ENCODE measurements at regions of chr17 and their contacts with region 1.

Region 1: DNA sequence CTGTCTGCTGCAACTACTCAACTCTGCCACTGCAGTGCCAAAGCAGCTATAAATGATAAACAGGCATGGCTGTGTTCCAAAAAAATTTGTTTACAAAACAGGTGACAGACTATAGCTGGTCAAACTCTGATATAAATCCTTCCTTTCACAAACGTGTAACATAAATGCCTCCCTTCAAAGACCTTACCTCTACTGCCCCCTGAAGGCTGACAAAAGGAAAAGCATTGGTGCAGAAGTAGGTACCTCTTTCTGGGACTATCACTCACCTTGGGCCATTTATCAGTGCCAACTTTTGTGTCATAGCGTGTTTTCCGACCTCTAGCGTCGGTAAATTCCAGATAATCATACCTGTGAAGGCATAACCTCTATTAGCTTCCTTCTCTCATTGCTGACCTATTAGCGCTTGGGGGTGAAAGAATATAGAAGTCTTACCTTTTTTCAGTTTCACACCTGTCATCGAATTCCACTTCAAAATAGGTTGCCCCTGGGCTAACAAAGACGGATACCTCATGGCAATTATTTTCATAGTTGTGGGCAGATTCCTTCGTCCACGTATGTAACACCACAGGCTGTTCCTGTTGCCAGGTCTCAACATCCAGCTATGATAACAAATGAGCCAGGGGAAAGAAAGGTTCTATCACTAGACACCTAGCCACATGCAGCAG is 67.9 kb downstream of the ZZEF1 start:
- DNase-seq: peak; percentile 26
- H3K4me3 Mint-ChIP-seq: no peak overlapping the region
- H3K27ac Mint-ChIP-seq: peak overlapping the region; percentile 9
- H3K4me1 Mint-ChIP-seq: no peaks in the 10 kb centered on the region
- H3K27me3 Mint-ChIP-seq: no peaks in the 10 kb centered on the region

Region 2: GRCh38 chr17:3845621-3846441 is 229.1 kb before region 1 on chr17 and contains the start of gene NCBP3:
- CTCF ChIA-PET with region 1: interaction called, 11 read pairs
- DNase-seq: peak; percentile 89
- H3K4me3 Mint-ChIP-seq: peak within 1 kb of the TSS; percentile 95
- H3K27ac Mint-ChIP-seq: peak within 1 kb of the TSS; percentile 91
- H3K4me1 Mint-ChIP-seq: peaks cover 26% of the 10 kb centered on the region
- H3K27me3 Mint-ChIP-seq: peaks cover 37% of the 10 kb centered on the region

Region 3: DNA sequence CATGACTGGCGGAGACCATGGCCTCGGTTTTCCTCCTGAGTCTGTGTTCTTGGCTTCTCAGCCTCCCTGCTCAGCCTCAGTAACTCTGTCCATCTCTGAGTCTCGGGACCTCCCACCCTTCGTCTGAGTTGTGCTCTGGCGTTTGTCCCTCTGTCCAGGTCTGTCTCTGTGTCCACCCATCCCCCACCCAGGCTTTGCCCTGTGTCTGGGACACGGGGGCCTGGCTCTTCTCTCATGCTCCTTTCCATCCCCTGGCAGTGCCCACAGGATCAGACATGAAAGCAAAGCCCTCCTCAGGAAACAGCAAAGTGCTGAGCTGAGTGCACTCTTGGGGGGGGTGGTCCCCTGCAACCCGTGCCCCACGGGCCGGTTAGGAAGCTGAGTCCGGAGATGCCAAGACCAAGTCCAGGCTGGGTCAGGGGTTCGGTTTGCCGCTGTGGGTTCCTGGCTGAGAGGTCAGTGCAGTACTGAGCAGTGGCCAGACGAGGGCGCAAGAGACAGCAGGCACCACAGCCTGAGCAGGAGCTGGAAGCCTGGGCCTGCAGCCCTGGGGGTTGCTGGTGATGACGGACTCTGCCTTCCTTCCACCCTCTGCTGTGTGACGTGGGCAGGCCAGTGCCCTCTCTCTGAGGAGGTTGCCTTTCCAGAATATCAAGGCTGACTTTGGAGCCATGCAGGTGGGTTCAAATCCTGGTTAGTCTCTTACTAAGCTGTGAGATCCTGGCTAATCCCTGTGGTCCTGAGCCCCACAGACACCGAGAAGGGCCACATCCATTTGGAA is 161.2 kb before region 1 on chr17:
- CTCF ChIA-PET with region 1: interaction called, 25 read pairs
- DNase-seq: peak; percentile 87
- H3K4me3 Mint-ChIP-seq: no peak overlapping the region
- H3K27ac Mint-ChIP-seq: no peak overlapping the region
- H3K4me1 Mint-ChIP-seq: peaks cover 62% of the 10 kb centered on the region
- H3K27me3 Mint-ChIP-seq: peaks cover 25% of the 10 kb centered on the region

Region 4: DNA sequence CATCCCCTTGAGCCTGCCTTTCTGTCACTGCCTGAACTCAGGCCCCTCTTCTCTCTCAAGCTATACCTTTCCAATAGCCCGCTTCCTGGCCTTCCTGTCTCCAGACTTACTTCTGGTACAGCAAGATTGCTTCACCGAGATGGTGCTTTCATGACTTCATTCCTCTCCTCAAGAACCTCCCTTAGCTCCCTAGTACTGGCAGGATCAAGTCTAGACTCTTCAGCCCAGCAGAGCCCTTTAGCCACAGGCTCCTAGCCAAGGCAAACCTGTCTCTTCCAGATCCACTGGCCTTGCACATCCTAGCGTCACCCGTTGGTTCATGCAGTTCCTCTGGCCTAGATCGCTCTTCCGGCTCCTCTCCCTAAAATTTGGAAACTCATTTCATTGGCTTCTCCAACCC is 104.3 kb before region 1 on chr17:
- CTCF ChIA-PET with region 1: no interaction called
- DNase-seq: no peak
- H3K4me3 Mint-ChIP-seq: no peak overlapping the region
- H3K27ac Mint-ChIP-seq: no peak overlapping the region
- H3K4me1 Mint-ChIP-seq: peaks cover 35% of the 10 kb centered on the region
- H3K27me3 Mint-ChIP-seq: peaks cover 68% of the 10 kb centered on the region

Region 5: DNA sequence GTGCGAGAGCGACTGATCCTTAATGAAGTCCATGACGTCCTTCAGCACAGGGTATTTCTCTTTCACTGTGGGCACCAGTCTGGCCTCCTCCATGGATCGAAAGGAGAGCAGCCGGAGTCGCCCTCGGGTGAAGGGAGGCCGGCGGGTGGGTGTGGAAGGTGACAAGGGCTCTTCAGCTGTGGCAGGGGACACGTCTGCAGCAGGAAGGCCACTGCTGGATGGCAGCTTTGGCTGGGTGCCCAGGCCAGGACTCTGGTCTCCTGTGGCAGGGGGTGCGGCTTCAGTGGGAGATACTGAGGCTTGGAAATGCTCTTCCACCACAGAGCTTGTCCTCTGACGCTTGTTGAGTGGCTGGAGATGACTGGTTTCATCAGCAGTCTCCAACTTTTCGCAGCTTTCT is 10.6 kb before region 1 on chr17:
- CTCF ChIA-PET with region 1: interaction called, 16 read pairs
- DNase-seq: no peak
- H3K4me3 Mint-ChIP-seq: no peak overlapping the region
- H3K27ac Mint-ChIP-seq: no peak overlapping the region
- H3K4me1 Mint-ChIP-seq: no peaks in the 10 kb centered on the region
- H3K27me3 Mint-ChIP-seq: no peaks in the 10 kb centered on the region

Measured in activated naive CD4-positive, alpha-beta T cell treated with anti-CD3 and anti-CD28 coated beads, Interleukin-2, amount 10 ng/mL, durations not matched to agents 7 days and 5 days (primary cell).